ENCODE measurements at regions of chr3 and their contacts with region 1.

Region 1: DNA sequence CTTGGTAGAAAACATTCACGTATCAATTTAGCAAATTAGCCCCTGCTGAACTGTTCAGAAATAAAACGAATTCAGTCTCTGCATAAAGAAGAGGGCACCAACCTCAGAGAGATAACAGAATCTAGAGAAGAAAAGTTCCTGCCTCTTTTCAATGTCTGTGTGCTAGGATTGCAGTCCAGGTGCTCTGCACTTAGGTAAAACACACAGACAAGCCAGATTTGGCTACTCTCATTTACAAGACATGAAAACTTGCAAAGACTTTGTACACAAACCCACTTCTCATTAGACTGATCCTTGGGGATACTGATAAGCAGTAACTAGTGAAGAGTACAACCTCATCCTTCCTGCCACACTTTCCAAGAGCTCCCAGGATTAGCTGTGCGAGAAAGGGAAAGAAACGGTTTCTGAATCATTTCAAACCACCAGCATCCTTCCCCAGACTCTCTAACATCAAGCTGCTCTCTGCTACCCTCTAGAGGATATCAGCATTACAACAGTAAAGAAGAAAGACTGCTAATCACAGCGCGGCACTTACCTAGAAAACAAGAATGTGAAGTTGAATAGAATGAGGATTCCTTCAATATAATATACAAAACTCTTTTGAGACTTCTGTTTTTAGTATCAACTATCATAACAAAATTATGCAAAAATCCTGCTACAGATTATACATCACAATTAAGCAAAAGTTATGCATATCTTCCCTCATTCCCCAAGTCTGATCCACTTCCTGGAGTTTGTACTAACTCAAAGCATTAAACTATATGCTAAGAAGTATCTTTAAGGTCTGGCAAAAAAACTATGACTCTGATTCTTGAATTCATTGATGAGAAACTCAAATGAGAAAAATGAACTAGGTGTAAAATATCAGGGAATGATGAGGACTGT is 306.4 kb downstream of the MAGI1 start:
- DNase-seq: peak in 1 of 10 donors; percentile 37
- H3K4me3 ChIP-seq: peak overlapping the region in 21 of 59 donors; percentile 3 to 47 (median 27)
- H3K27ac ChIP-seq: peak overlapping the region in 3 of 59 donors; percentile 12 to 57 (median 18)
- H3K27me3 ChIP-seq: no peaks in the 10 kb centered on the region
- CTCF ChIP-seq: peak; percentile 65 to 95 (median 86)

Region 2: DNA sequence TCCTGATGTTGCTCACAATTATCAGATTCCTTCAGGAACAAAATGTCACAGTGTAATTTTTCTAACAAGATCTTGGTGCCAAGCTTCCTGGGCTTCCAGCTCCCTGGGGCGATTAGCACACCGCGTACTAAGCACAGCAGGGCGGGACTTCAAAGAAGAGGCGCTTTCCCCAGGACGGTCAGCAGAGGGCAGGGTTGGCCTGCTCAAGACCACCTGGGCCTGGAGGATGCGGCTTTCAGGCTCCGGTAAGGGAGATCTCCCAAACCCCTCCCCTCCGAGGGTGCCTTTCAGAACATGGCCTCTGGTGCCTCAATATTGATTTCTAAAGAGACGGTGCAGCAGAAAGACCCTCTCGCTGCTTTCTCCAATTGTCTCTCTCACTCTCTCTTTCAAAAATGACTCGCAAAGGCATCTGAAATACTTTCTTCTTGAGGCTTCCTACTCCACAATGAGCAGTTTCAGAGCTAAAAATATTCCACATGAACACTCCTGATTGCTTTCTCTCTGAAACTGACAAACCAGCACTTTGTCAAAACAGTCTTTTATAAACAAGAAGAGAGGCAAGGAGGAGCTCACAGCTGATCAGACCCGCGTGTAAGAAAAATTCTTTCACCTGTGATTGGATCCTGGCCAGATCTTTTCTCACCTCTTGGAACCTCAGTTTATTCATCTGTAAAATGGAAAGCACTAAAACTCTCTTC is 1198.5 kb before region 1 on chr3:
- intact Hi-C with region 1: loop called (anchors 10 kb)
- DNase-seq: peak; percentile 67 to 90 (median 84)
- H3K4me3 ChIP-seq: peak overlapping the region in 50 of 59 donors; percentile 5 to 62 (median 36)
- H3K27ac ChIP-seq: peak overlapping the region in 14 of 59 donors; percentile 7 to 69 (median 36)
- H3K27me3 ChIP-seq: no peaks in the 10 kb centered on the region
- CTCF ChIP-seq: peak; percentile 71 to 96 (median 90)

Region 3: DNA sequence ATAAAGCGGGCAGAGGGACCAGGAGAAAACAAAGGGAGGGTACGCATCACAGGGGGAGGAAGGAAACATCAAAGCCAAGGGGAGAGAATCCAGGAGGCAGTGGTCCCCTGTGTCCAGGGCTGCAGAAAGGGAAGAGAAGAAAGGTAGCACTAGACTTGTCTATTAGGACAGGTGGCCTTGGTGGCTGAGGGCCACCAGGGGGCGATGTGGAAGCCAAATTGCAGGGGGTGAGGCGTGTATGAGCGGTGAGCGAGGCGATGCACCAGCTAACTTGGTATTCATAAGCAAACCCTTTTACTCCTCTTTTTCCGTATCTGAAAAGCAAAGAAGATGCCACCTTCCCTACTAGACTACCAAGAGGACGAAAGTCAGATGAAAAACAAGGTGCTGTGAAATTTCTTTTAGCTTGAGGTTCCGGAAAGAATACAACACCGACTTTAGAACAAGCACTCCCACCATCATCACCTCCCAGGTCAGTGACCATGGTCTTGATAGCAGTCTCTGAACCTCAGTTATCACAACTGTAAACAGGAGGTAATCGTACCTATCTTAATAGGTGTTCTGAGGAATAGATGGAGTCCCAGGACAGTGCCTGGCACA is 390.1 kb before region 1 on chr3:
- intact Hi-C with region 1: loop called in 1 of 2 experiments (anchors 10 kb)
- DNase-seq: peak in 3 of 10 donors; percentile 21 to 42 (median 34)
- H3K4me3 ChIP-seq: no peak overlapping the region
- H3K27ac ChIP-seq: no peak overlapping the region
- H3K27me3 ChIP-seq: no peaks in the 10 kb centered on the region
- CTCF ChIP-seq: peak in 53 of 56 donors; percentile 25 to 68 (median 52)

Region 4: GRCh38 chr3:65672871-65673815 is 59.1 kb before region 1 on chr3:
- intact Hi-C with region 1: loop called in 1 of 2 experiments (anchors 10 kb)
- DNase-seq: peak; percentile 46 to 76 (median 63)
- H3K4me3 ChIP-seq: no peak overlapping the region
- H3K27ac ChIP-seq: no peak overlapping the region
- H3K27me3 ChIP-seq: no peaks in the 10 kb centered on the region
- CTCF ChIP-seq: peak; percentile 76 to 98 (median 88)

Region 5: DNA sequence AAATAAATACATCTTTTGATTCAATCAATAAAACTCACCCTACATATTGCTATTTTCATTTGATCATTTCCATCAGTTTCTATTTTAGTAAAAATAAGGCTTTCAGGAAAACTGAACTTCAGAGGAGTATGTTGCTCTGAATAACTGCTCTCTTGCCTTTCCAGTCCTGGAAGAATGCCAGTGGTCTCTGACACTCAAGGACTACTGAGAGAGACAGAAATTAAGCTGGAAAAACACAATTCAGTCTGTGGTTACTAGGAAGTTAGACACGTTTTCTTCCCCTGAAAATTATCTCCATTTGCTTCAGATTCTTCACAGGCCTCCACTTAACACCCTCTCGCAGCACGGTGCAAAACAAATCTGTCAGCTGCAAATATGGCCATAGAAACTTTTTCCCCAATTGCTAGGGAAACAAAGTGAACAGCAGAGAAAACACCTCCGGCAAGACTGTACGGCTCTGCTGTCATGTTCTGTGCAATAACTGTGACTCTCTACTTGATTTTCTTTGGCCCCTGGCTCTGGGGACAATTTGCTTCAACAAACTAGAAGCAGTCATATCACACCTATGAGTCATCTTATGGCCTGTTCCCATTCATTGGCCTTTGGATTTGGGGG is 46.6 kb before region 1 on chr3:
- intact Hi-C with region 1: loop called in 1 of 2 experiments (anchors 5 kb)
- DNase-seq: peak in 2 of 10 donors; percentile 10 to 23
- H3K4me3 ChIP-seq: no peak overlapping the region
- H3K27ac ChIP-seq: peak overlapping the region in 1 of 59 donors; percentile 45
- H3K27me3 ChIP-seq: no peaks in the 10 kb centered on the region
- CTCF ChIP-seq: no peak

Region 6: GRCh38 chr3:65776494-65776893 is 44.2 kb after region 1 on chr3:
- intact Hi-C with region 1: no loop called
- DNase-seq: no peak
- H3K4me3 ChIP-seq: peak overlapping the region in 8 of 59 donors; percentile 1 to 31 (median 20)
- H3K27ac ChIP-seq: peak overlapping the region in 33 of 59 donors; percentile 2 to 76 (median 55)
- H3K27me3 ChIP-seq: no peaks in the 10 kb centered on the region
- CTCF ChIP-seq: no peak

Region 7: DNA sequence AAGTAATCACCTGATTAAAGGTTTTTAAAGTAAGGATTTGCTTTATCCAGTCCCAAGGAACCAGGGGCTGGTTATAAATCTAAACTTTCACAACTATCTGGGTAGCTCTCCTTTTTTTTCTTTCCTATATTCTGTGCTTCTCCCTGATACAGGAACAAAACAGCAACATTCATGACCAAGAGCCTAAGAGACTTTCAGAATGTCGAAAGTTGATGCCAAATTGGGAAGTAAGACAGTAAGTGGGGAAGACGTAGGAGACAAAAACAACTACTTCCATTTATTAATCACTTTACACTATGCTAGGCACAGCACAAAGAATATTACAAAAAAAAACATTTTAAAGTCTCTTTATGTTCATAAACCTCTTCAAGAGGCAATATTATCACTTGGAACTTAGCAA is 94.8 kb after region 1 on chr3:
- intact Hi-C with region 1: no loop called
- DNase-seq: no peak
- H3K4me3 ChIP-seq: no peak overlapping the region
- H3K27ac ChIP-seq: no peak overlapping the region
- H3K27me3 ChIP-seq: no peaks in the 10 kb centered on the region
- CTCF ChIP-seq: no peak

Region 8: GRCh38 chr3:65953301-65953812 is 221.1 kb after region 1 on chr3:
- intact Hi-C with region 1: no loop called
- DNase-seq: peak in 1 of 10 donors; percentile 66
- H3K4me3 ChIP-seq: peak overlapping the region in 1 of 59 donors; percentile 40
- H3K27ac ChIP-seq: peak overlapping the region in 35 of 59 donors; percentile 3 to 68 (median 39)
- H3K27me3 ChIP-seq: no peaks in the 10 kb centered on the region
- CTCF ChIP-seq: no peak

Measured in dorsolateral prefrontal cortex (tissue), 120 donors.